ENCODE measurements at regions of chr16 and their contacts with region 1.

Region 1: DNA sequence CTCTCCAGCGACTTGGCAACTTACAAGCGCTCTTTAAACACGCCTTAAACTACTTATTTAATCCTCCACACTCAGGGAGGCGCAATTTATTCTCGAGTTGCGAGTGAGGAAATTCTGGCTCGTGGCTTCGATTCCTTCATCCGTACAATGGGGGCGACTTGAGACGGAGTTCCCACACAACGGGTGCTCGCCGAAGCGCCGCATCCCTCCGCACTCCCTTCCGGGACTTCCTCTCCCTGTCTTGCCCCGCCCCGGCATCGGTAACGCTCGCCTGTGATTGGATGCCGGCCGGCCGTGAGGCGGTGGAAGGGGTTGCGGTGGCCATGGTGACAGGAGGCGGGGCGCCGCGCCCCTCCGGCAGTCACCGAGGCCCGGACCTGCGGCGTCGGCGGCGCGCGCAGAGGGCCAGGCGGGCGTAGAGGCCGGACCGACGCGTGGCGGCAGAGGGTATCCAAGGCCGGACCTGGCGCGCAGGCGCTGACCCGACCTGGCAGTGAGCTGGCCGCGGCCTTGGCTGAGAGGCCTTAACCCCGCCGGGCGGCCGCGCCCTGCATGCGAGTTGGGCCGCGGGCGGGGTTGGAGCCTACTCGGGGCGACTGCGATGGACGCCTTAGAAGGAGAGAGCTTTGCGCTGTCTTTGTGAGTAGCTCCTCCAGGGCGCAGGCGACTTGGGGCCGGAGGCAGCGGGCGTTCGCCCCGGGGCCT is at the start of gene ARL2BP:
- DNase-seq: peak; percentile 90 to 98 (median 96)
- ATAC-seq: peak; percentile 97
- H3K4me3 ChIP-seq: peak within 1 kb of the TSS; percentile 44
- H3K4me3 Mint-ChIP-seq: peak within 1 kb of the TSS; percentile 81 to 97 (median 89)
- H3K27ac ChIP-seq: peak within 1 kb of the TSS; percentile 84
- H3K27ac Mint-ChIP-seq: peak within 1 kb of the TSS; percentile 88 to 97 (median 93)
- H3K4me1 ChIP-seq: peaks cover 5 to 6% of the 10 kb centered on the region in 2 donors
- H3K4me1 Mint-ChIP-seq: peaks cover 14 to 25% (median 17%) of the 10 kb centered on the region in 7 donors
- H3K27me3 ChIP-seq: no peaks in the 10 kb centered on the region
- H3K27me3 Mint-ChIP-seq: no peaks in the 10 kb centered on the region
- total RNA-seq, gene ARL2BP: 32.6 to 57.7 (median 37.9) TPM

Region 2: GRCh38 chr16:57091975-57092785 is 152.7 kb before region 1 on chr16 and contains the start of gene CPNE2:
- CTCF ChIA-PET with region 1: no interaction called
- POLR2A ChIA-PET with region 1: no interaction called
- intact Hi-C with region 1: loop called in 1 of 2 experiments (anchors 10 kb)
- DNase-seq: peak in 2 of 9 donors; percentile 17 to 29
- ATAC-seq: peak; percentile 63
- H3K4me3 ChIP-seq: peak within 1 kb of the TSS; percentile 50
- H3K4me3 Mint-ChIP-seq: peak within 1 kb of the TSS; percentile 65 to 86 (median 80)
- H3K27ac ChIP-seq: peak within 1 kb of the TSS; percentile 10
- H3K27ac Mint-ChIP-seq: peak within 1 kb of the TSS in 8 of 9 donors; percentile 14 to 78 (median 52)
- H3K4me1 ChIP-seq: peaks cover 0 to 13% of the 10 kb centered on the region in 2 donors
- H3K4me1 Mint-ChIP-seq: peaks cover 8 to 19% (median 10%) of the 10 kb centered on the region in 7 donors
- H3K27me3 ChIP-seq: no peaks in the 10 kb centered on the region
- H3K27me3 Mint-ChIP-seq: peaks cover 0 to 34% (median 0%) of the 10 kb centered on the region in 5 donors
- total RNA-seq, gene CPNE2: 1.1 to 11.7 (median 3.5) TPM

Region 3: DNA sequence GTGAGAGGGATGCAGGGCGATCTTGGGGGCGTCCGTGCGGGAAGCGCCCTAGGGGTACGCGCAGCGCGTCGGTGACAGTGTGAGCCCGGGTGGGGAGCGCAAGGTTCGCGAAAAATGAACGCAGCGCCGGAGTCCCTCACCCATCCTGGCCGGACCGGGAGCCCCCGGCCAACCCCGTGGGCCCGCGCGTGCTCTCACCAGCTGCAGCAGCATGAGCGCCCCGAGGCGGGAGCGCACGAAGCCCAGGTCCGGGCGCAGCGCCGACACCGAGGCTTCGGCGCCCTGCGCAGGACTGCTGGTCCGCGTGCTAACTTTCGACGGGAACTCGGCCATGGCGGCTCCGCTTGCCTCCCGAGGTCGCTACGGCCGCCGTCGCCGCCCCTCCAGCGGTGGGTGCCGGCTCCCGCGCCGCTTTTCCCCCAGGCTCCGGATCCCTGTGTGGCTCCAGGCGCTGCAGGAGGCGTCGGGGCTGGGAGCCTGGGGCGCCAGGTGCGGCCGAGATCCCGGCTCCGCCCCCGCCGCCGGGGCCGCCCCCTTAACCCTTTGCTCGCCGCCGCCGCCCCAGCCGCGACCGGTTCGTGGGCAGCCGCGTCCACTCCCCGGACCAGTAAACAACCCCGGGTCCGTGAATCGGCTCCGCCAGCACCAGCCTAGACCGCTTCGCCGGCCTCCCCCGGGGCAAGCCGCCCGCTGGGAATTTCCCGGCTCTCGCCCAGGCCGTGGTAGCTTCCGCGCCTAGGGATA is 39.5 kb after region 1 on chr16 and contains the start of gene PLLP:
- CTCF ChIA-PET with region 1: no interaction called
- POLR2A ChIA-PET with region 1: interaction called, 9 read pairs
- intact Hi-C with region 1: loop called (anchors 1 to 5 kb)
- DNase-seq: peak; percentile 30 to 66 (median 51)
- ATAC-seq: peak; percentile 82
- H3K4me3 ChIP-seq: peak within 1 kb of the TSS; percentile 60
- H3K4me3 Mint-ChIP-seq: peak within 1 kb of the TSS; percentile 77 to 89 (median 84)
- H3K27ac ChIP-seq: peak within 1 kb of the TSS; percentile 59
- H3K27ac Mint-ChIP-seq: peak within 1 kb of the TSS in 8 of 9 donors; percentile 10 to 94 (median 64)
- H3K4me1 ChIP-seq: peaks cover 0 to 25% of the 10 kb centered on the region in 2 donors
- H3K4me1 Mint-ChIP-seq: peaks cover 20 to 51% (median 41%) of the 10 kb centered on the region in 7 donors
- H3K27me3 ChIP-seq: peaks cover 0 to 8% of the 10 kb centered on the region in 2 donors
- H3K27me3 Mint-ChIP-seq: peaks cover 0 to 41% (median 0%) of the 10 kb centered on the region in 5 donors
- total RNA-seq, gene PLLP: 0.36 to 8.4 (median 3.3) TPM

Region 4: GRCh38 chr16:57422026-57422944 is 177.4 kb after region 1 on chr16:
- CTCF ChIA-PET with region 1: interaction called, 13 read pairs
- POLR2A ChIA-PET with region 1: interaction called, 3 read pairs
- intact Hi-C with region 1: loop called in 1 of 2 experiments (anchors 1 kb)
- DNase-seq: no peak
- ATAC-seq: no peak
- H3K4me3 ChIP-seq: no peak overlapping the region
- H3K4me3 Mint-ChIP-seq: no peak overlapping the region
- H3K27ac ChIP-seq: no peak overlapping the region
- H3K27ac Mint-ChIP-seq: peak overlapping the region in 1 of 9 donors; percentile 48
- H3K4me1 ChIP-seq: peaks cover 9 to 10% of the 10 kb centered on the region in 2 donors
- H3K4me1 Mint-ChIP-seq: peaks cover 11 to 29% (median 24%) of the 10 kb centered on the region in 7 donors
- H3K27me3 ChIP-seq: no peaks in the 10 kb centered on the region
- H3K27me3 Mint-ChIP-seq: no peaks in the 10 kb centered on the region

Region 5: DNA sequence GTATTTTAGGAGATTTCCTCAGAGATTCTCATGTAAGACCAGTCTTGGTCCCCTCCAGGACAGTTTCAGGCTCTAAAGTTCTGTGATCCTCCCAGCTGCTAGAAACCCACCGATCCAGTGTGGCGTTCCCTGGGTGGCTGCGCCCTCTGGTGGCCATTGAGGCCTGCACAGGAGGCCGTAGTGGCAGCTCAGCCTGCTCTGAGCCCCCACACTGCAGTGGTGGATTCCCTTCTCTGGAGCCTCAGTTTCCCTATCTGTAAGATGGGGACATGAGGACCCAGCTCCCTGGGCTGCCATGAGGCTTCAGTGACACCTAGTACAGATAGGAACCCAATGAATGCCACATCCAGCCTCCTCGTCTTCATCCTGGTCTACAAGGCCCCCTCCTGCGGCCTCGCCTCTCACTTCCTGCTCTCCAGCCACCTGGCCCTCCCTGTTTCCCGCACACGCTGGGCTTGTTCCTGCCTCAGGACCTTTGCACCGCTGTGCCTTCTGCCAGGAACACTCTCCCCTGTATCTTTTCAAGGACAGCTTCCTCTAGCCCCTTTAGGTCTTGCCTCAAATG is 275.0 kb after region 1 on chr16:
- CTCF ChIA-PET with region 1: interaction called, 3 read pairs
- POLR2A ChIA-PET with region 1: no interaction called
- intact Hi-C with region 1: loop called in 1 of 2 experiments (anchors 1 kb)
- DNase-seq: peak; percentile 61 to 86 (median 73)
- ATAC-seq: peak; percentile 90
- H3K4me3 ChIP-seq: no peak overlapping the region
- H3K4me3 Mint-ChIP-seq: no peak overlapping the region
- H3K27ac ChIP-seq: no peak overlapping the region
- H3K27ac Mint-ChIP-seq: peak overlapping the region in 3 of 9 donors; percentile 62 to 83 (median 76)
- H3K4me1 ChIP-seq: peaks cover 7 to 8% of the 10 kb centered on the region in 2 donors
- H3K4me1 Mint-ChIP-seq: peaks cover 5 to 19% (median 6%) of the 10 kb centered on the region in 7 donors
- H3K27me3 ChIP-seq: no peaks in the 10 kb centered on the region
- H3K27me3 Mint-ChIP-seq: no peaks in the 10 kb centered on the region

Measured in naive thymus-derived CD4-positive, alpha-beta T cell (primary cell).